ENCODE measurements at regions of chr19 and their contacts with region 1.

Region 1: DNA sequence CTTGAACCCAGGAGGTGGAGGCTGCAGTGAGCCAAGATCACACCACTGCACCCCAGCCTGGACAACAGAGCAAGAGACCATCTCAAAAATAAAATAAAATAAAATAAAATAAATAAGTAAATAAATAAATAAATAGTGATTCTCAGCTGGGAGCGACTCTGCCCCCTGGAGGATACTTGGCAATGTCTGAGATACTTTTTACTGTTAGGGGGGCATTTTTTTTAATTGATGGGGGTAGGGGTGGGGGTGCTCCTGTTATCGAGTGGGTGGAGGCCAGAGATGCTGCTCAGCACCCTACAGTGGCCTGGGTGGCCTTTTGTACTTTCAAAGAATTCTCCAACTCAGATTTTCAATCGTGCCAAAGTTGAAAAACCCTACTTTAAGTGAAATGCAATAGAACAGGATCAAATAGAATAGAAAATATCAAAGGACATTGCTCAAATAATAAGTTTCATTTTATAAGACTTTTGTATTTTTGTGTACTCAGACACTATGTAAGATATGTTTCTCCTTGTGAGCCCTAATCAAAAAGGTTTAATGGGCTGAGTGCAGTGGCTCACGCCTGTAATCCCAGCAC is 7.1 kb upstream of the CLPP start:
- DNase-seq: no peak
- H3K4me3 ChIP-seq: no peak overlapping the region
- H3K27ac ChIP-seq: no peak overlapping the region
- H3K4me1 ChIP-seq: no peaks in the 10 kb centered on the region
- H3K27me3 ChIP-seq: no peaks in the 10 kb centered on the region
- CTCF ChIP-seq: peak; percentile 15 to 51
- POLR2A ChIP-seq: no peak

Region 2: DNA sequence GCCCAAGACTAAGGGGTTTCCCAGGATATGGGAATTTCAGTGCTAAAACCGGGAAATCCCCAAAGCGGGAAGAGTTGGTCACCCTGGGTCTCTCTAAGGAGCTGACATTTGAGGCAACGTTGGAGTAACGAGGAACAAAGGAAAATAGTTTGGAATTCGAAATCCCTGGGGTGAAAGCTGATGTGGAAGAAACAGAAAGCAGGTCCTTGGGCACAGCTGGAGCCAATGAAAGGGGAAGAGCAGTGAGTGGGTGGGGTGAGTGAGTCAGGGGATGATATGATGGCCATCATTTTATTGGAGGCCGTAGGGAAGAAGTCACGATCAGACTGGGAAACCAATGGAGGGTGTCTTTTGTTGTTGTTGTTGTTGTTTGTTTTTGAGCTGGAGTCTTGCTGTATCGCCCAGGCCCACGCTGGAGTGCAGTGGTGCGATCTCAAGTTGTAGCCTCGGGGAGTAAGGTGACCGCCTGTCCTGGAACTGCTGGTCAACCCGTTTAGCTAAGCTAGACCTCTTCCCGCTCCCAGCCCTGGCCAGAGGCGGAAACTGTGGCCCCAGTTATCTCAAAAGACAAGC is 240.5 kb before region 1 on chr19:
- CTCF ChIA-PET with region 1: no interaction called
- POLR2A ChIA-PET with region 1: no interaction called
- dilution Hi-C with region 1: no loop called
- intact Hi-C with region 1: no loop called
- DNase-seq: no peak
- H3K4me3 ChIP-seq: no peak overlapping the region
- H3K27ac ChIP-seq: no peak overlapping the region
- H3K4me1 ChIP-seq: peaks cover 9% of the 10 kb centered on the region
- H3K27me3 ChIP-seq: peaks cover 6% of the 10 kb centered on the region in 2 experiments
- CTCF ChIP-seq: no peak
- POLR2A ChIP-seq: no peak

Region 3: GRCh38 chr19:6167115-6167514 is 187.1 kb before region 1 on chr19:
- CTCF ChIA-PET with region 1: interaction called, 23 read pairs
- POLR2A ChIA-PET with region 1: no interaction called
- dilution Hi-C with region 1: no loop called
- intact Hi-C with region 1: loop called (anchors 1 kb)
- DNase-seq: no peak
- H3K4me3 ChIP-seq: no peak overlapping the region
- H3K27ac ChIP-seq: no peak overlapping the region
- H3K4me1 ChIP-seq: no peaks in the 10 kb centered on the region
- H3K27me3 ChIP-seq: peaks cover 3 to 8% of the 10 kb centered on the region in 2 experiments
- CTCF ChIP-seq: no peak
- POLR2A ChIP-seq: no peak

Region 4: DNA sequence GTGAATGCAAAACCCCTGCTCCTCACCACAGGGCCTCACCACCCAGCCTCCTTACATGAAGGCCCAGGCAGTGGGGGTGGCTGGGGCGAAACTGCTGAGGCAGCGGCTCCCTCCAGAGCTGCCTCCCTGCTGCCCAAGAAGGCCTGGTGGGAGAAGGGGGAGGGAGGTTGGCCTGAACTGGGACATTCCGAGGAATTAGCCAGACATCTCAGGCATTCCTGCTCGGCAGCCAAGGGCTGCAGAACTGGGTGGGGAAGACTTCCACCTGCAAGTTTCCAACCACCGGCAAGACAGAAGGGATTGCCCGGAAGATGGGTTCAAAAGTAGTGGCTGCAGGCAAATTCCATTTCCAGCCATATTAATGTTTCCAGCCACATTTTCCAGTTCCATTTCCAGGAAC is 23.9 kb after region 1 on chr19:
- CTCF ChIA-PET with region 1: no interaction called
- POLR2A ChIA-PET with region 1: no interaction called
- dilution Hi-C with region 1: no loop called
- intact Hi-C with region 1: no loop called
- DNase-seq: peak; percentile 0
- H3K4me3 ChIP-seq: no peak overlapping the region
- H3K27ac ChIP-seq: no peak overlapping the region
- H3K4me1 ChIP-seq: peaks cover 2% of the 10 kb centered on the region
- H3K27me3 ChIP-seq: no peaks in the 10 kb centered on the region
- CTCF ChIP-seq: no peak
- POLR2A ChIP-seq: no peak

Region 5: DNA sequence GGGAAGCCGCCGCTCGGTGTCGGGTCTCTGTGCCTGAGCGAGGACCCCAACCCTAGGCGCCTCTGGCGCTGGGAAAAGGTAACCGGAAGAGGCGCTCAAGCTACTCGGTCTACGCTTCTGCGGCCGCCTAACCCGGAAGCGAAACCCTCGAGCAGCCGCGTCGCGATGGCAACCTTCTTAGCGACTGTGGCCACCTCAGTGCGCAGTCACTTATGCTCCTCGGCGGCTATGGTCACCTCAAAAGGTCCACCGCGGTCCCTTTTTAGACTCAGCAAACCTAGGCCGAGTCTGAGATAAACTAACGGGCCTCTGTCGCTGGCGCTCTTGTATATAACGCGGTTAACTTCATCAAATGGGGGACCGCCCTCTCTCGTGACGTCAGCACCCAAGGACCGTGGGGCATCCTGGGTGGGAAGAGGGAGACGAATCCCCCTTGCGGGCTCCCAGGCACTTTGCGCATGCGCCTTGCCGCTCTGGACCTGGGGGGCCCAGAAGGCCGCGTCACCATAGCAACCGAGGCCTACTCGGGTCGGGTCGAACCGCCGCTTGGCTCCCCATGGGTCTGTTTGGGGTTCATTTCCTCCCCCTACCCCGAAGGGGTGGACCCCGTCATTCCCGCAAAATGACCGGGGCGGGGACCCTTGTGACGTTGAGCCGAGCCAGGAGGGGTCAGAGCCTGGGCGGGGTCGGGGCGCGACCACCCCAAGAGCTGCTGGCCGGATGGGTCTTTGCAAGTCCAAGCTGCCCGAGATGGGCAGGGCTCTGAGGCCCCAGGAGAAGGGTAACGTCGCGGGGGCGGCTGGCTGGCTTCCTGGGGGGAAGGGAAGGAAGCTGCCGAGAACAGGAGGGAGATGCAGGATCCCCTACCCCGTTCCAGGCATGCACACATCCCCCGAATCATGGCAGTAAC is 39.1 kb after region 1 on chr19 and contains the start of gene GTF2F1:
- CTCF ChIA-PET with region 1: no interaction called
- POLR2A ChIA-PET with region 1: no interaction called
- dilution Hi-C with region 1: no loop called
- intact Hi-C with region 1: no loop called
- DNase-seq: peak; percentile 92
- H3K4me3 ChIP-seq: peak within 1 kb of the TSS; percentile 42 to 77 (median 74)
- H3K27ac ChIP-seq: peak within 1 kb of the TSS; percentile 77
- H3K4me1 ChIP-seq: peaks cover 7% of the 10 kb centered on the region
- H3K27me3 ChIP-seq: no peaks in the 10 kb centered on the region
- CTCF ChIP-seq: peak in 1 of 2 donors; percentile 9
- POLR2A ChIP-seq: peak; percentile 75
- total RNA-seq, gene GTF2F1: 56.4 and 58.2 TPM in 2 replicates

Region 6: GRCh38 chr19:6590827-6591319 is 236.7 kb after region 1 on chr19 and contains the start of gene CD70:
- CTCF ChIA-PET with region 1: no interaction called
- POLR2A ChIA-PET with region 1: no interaction called
- dilution Hi-C with region 1: no loop called
- intact Hi-C with region 1: no loop called
- DNase-seq: no peak
- H3K4me3 ChIP-seq: no peak within 1 kb of the TSS
- H3K27ac ChIP-seq: no peak within 1 kb of the TSS
- H3K4me1 ChIP-seq: no peaks in the 10 kb centered on the region
- H3K27me3 ChIP-seq: peaks cover 43 to 51% of the 10 kb centered on the region in 2 experiments
- CTCF ChIP-seq: no peak
- POLR2A ChIP-seq: no peak
- total RNA-seq, gene CD70: not detected in 2 replicates

Measured in endothelial cell of umbilical vein (primary cell).